Heart right ventricle (tissue), 16 donors: ENCODE measurements at regions of chr18 and their contacts with region 1.

Region 1: GRCh38 chr18:48896690-48897511 is 53.9 kb downstream of the SMAD7 start:
- DNase-seq: peak; percentile 54 to 56
- ATAC-seq: peak; percentile 53 to 72 (median 63)
- H3K4me3 ChIP-seq: no peak overlapping the region
- H3K27ac ChIP-seq: peak overlapping the region in 5 of 10 donors; percentile 0 to 81 (median 50)
- H3K4me1 ChIP-seq: peaks cover 2 to 37% (median 14%) of the 10 kb centered on the region in 9 donors
- H3K27me3 ChIP-seq: no peaks in the 10 kb centered on the region
- CTCF ChIP-seq: peak in 2 of 9 donors; percentile 18

Region 2: DNA sequence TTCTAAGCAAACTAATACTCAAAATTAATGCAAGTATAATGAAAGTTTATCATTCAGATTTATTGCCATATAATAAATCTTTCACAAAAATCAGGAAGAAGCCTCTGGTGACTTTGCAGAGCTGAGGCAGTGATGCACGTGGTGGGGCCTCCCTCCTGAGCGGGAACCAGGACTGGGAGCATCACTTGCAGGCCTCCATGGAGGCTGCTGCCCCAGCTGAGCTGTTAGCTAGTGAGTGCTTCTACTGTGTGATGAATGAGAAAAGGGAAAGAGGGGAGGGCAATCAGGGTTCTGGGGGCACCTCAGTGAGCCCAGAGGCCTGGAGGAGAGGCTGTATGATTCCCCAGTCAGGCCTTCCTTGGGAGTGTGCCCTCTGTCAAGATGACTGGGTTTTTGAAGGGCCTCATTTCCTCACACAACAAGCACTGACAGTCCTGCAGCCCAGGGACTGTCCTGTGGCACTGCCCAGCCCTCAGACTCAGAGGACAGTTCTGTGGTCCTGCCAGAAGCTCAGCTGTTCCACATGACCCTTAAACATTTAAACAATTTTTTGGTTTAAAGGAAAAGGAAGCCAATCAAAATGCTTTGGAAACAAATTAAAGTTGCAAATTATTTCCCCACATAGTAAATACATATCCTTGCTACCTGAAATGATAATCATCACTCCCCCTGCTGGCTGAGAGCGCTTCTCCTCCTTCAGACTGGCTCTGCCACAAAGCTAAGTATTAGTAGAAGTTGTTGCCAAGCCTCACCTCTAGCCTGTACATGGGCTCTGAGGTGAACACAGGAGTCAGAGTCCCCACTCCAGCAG is 144.7 kb after region 1 on chr18:
- intact Hi-C with region 1: loop called in 1 of 10 experiments (anchors 10 kb)
- DNase-seq: peak; percentile 37 to 66
- ATAC-seq: peak; percentile 56 to 86 (median 71)
- H3K4me3 ChIP-seq: no peak overlapping the region
- H3K27ac ChIP-seq: peak overlapping the region in 1 of 10 donors; percentile 22
- H3K4me1 ChIP-seq: peaks cover 0 to 14% (median 8%) of the 10 kb centered on the region in 9 donors
- H3K27me3 ChIP-seq: no peaks in the 10 kb centered on the region
- CTCF ChIP-seq: peak; percentile 49 to 75 (median 69)

Region 3: DNA sequence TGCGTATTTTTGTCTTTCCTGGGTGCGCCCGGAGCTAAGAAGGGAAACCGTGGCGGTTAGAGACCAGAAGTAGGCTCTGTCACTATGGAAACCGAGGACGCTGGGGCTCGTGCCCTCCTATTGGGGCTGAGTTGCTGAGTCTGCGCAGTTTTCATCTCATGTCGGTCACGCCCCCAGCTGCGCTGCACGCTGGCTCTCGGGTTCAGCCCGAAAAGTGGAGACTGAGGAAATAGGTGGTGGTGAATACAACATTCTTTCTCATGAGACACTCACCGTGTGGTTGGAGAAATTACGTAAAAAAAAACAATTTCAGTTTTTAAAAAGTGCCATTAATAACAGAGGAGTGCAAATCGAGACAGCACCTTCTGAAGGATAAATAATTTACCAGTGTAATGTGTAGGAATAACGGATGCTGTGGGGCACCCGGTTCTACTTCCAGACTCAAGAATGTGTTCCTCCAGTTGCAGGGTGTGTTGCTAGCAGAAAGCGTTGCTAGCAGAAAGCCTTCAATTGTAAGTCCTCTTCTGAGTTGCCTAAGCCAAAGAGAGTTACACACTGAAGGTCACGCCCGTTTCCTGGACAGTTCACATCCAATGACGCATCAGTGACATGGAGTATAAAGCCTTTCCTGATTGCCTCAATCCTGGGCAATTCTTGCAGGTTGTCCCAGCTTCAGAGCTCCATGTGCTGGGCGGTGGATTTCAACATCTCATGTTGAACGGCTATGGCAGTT is 1411.0 kb after region 1 on chr18:
- intact Hi-C with region 1: no loop called
- DNase-seq: peak; percentile 86 to 93
- ATAC-seq: peak; percentile 95 to 99 (median 98)
- H3K4me3 ChIP-seq: peak overlapping the region in 9 of 10 donors; percentile 22 to 57 (median 56)
- H3K27ac ChIP-seq: peak overlapping the region in 2 of 10 donors; percentile 5 to 60
- H3K4me1 ChIP-seq: peaks cover 0 to 21% (median 7%) of the 10 kb centered on the region in 9 donors
- H3K27me3 ChIP-seq: peaks cover 0 to 31% (median 13%) of the 10 kb centered on the region in 7 donors
- CTCF ChIP-seq: no peak